Posterior cingulate gyrus (tissue), 11 donors: ENCODE measurements at regions of chr9 and their contacts with region 1.

Region 1: GRCh38 chr9:90517110-90517509 is 125.5 kb downstream of the DIRAS2 start:
- DNase-seq: no peak

Region 2: GRCh38 chr9:90349907-90350306 is 167.2 kb before region 1 on chr9:
- intact Hi-C with region 1: loop called (anchors 10 kb)
- DNase-seq: no peak

Region 3: DNA sequence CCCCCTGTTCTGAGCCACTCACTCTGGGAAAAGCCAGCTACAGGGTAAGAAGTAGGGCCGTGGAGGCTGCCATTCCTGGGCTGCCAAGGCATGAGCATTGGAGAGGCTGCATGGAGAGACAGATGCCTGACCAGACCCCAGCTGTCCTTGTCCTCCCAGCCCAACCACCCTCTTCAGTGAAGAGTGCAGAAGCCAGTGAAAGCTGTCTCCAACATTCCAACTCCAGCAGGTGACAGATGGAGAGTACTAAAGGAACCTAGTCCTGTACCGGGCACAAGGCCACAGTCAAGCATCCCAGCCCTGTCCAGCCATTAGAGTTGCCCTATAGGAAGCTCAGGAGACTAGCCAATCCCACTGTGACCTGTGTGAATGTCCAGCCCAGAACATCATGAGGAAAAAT is 39.6 kb before region 1 on chr9:
- intact Hi-C with region 1: no loop called
- DNase-seq: no peak

Region 4: GRCh38 chr9:90499761-90500160 is 17.3 kb before region 1 on chr9:
- intact Hi-C with region 1: no loop called
- DNase-seq: no peak